Heart left ventricle (tissue), 16 donors: ENCODE measurements at regions of chr15 and their contacts with region 1.

Region 1: GRCh38 chr15:27065151-27065550 is 94.2 kb downstream of the GABRG3 start:
- DNase-seq: no peak
- ATAC-seq: no peak
- H3K4me3 ChIP-seq: no peak overlapping the region
- H3K27ac ChIP-seq: no peak overlapping the region
- H3K4me1 ChIP-seq: no peaks in the 10 kb centered on the region
- H3K27me3 ChIP-seq: peaks cover 0 to 4% (median 0%) of the 10 kb centered on the region in 9 donors
- CTCF ChIP-seq: no peak
- POLR2A ChIP-seq: no peak

Region 2: GRCh38 chr15:27045796-27046195 is 19.4 kb before region 1 on chr15:
- intact Hi-C with region 1: loop called in 1 of 10 experiments (anchors 2 kb)
- DNase-seq: no peak
- ATAC-seq: no peak
- H3K4me3 ChIP-seq: no peak overlapping the region
- H3K27ac ChIP-seq: no peak overlapping the region
- H3K4me1 ChIP-seq: no peaks in the 10 kb centered on the region
- H3K27me3 ChIP-seq: no peaks in the 10 kb centered on the region
- CTCF ChIP-seq: no peak
- POLR2A ChIP-seq: no peak